Uterus (tissue), 4 donors: ENCODE measurements at regions of chr2 and their contacts with region 1.

Region 1: DNA sequence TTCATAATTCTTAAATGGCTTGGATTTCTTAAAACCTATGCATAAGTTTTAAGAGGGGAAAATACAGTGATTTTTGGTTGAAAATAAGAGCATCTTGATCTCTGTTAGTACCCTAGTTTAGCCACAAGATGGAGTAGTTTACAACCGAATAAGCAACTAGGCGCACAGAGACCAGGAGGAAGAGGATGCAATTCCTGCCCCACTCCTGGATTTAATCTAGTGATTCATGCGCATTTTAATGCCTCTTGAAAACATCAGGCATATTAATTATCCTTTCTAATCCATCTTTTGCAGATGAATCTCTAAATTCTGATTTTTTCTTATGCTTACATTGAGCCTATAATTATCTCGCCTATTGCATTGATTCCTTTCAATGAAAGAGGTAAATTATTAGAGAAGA is 76.7 kb downstream of the MRPS9 start:
- DNase-seq: no peak
- H3K4me3 ChIP-seq: no peak overlapping the region
- H3K27ac ChIP-seq: no peak overlapping the region
- H3K4me1 ChIP-seq: no peaks in the 10 kb centered on the region
- H3K27me3 ChIP-seq: no peaks in the 10 kb centered on the region
- CTCF ChIP-seq: peak; percentile 52 to 66 (median 53)
- POLR2A ChIP-seq: no peak

Region 2: DNA sequence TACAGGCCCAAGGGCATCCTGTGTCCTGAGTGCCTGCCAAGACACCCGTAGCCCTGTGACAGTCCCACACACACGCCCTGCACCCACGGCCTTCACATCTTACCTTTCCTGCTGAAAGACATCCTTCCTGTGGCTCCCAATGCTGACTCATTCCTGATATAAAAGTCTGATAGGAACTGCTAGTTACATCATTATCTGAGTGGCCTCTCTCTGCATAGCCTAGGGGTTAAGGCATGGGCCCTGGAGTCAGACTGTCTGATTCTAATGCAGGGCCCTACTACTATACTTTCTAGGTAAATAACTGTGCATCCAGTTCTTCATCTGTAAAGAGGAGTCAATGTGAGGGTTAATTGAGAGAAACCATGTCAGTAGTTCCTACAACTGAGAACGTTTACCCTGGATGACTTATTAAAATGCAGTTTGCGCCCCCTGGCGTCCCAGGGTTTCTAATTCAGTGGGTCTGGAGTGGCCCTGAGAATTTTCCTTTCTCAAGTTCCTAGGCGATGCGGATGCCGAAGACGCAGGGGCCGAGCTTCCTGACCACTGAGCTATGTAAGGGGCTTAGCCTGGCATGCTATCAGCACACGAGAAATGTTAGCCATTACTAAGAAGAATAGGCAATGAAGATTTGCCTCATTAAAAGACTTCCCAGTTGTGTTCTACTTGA is 121.0 kb after region 1 on chr2:
- intact Hi-C with region 1: loop called (anchors 10 kb)
- DNase-seq: peak; percentile 36 to 43
- H3K4me3 ChIP-seq: no peak overlapping the region
- H3K27ac ChIP-seq: no peak overlapping the region
- H3K4me1 ChIP-seq: no peaks in the 10 kb centered on the region
- H3K27me3 ChIP-seq: no peaks in the 10 kb centered on the region
- CTCF ChIP-seq: peak in 3 of 4 experiments; percentile 31 to 48 (median 40)
- POLR2A ChIP-seq: no peak